ENCODE measurements at regions of chr17 and their contacts with region 1.

Region 1: DNA sequence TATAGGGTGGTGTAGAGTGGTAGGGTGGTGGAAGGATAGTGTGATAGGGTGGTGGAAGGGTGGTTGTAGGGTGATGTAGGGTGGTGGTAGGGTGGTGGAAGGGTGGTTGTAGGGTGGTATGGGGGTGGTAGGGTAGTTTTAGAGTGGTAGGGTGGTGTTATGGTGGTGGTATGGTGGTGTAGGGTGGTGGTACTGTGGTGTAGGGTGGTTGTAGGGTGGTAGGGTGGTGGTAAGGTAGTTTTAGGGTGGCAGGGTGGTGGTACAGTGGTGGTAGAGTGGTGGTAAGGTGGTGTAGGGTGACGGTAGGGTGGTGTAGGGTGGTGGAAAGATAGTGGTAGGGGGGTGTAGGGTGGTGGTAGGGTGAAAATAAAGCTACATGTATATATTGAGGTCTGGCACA is 61.4 kb downstream of the AXIN2 start:
- DNase-seq: no peak
- H3K4me3 ChIP-seq: no peak overlapping the region
- H3K27ac ChIP-seq: no peak overlapping the region
- H3K4me1 ChIP-seq: no peaks in the 10 kb centered on the region
- H3K27me3 ChIP-seq: no peaks in the 10 kb centered on the region
- CTCF ChIP-seq: no peak
- POLR2A ChIP-seq: no peak

Region 2: DNA sequence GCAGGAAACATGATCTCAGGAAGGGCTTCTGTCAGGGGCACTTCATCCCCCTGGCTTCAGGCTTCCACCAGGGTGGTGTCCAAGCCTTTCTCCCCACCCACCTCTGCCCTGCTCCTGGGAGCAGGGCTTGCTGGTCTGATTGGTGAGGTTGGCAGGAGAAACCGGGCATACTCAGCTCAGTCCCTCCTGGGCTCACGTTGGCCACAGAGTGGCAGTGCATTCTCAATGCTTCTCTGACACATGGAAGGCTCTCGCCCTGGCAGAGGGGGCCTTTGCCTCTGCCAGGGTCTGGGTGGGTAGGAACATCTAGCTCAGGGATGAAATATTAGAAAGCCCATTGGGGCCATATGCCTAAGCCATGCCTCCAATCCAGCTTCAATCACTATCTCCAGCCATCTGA is 81.4 kb before region 1 on chr17:
- intact Hi-C with region 1: no loop called
- DNase-seq: no peak
- H3K4me3 ChIP-seq: no peak overlapping the region
- H3K27ac ChIP-seq: no peak overlapping the region
- H3K4me1 ChIP-seq: no peaks in the 10 kb centered on the region
- H3K27me3 ChIP-seq: no peaks in the 10 kb centered on the region
- CTCF ChIP-seq: no peak
- POLR2A ChIP-seq: no peak

Region 3: GRCh38 chr17:65430209-65430833 is 69.7 kb before region 1 on chr17:
- intact Hi-C with region 1: no loop called
- DNase-seq: no peak
- H3K4me3 ChIP-seq: no peak overlapping the region
- H3K27ac ChIP-seq: no peak overlapping the region
- H3K4me1 ChIP-seq: no peaks in the 10 kb centered on the region
- H3K27me3 ChIP-seq: no peaks in the 10 kb centered on the region
- CTCF ChIP-seq: no peak
- POLR2A ChIP-seq: no peak

Region 4: GRCh38 chr17:65561394-65562205 is 61.6 kb after region 1 on chr17 and contains the start of gene AXIN2:
- intact Hi-C with region 1: no loop called
- DNase-seq: no peak
- H3K4me3 ChIP-seq: peak within 1 kb of the TSS in 1 of 2 donors; percentile 96
- H3K27ac ChIP-seq: no peak within 1 kb of the TSS
- H3K4me1 ChIP-seq: peaks cover 29% of the 10 kb centered on the region
- H3K27me3 ChIP-seq: no peaks in the 10 kb centered on the region
- CTCF ChIP-seq: peak in 1 of 3 experiments; percentile 33
- POLR2A ChIP-seq: no peak
- total RNA-seq, gene AXIN2: 17.9 TPM

Region 5: GRCh38 chr17:67245073-67245755 is 1745.2 kb after region 1 on chr17 and contains the start of gene HELZ:
- intact Hi-C with region 1: loop called (anchors 5 kb)
- DNase-seq: no peak
- H3K4me3 ChIP-seq: peak within 1 kb of the TSS; percentile 81 to 88
- H3K27ac ChIP-seq: peak within 1 kb of the TSS; percentile 94
- H3K4me1 ChIP-seq: peaks cover 49% of the 10 kb centered on the region
- H3K27me3 ChIP-seq: no peaks in the 10 kb centered on the region
- CTCF ChIP-seq: no peak
- POLR2A ChIP-seq: no peak
- total RNA-seq, gene HELZ: 31.4 TPM

Measured in vagina (tissue), 2 donors.